A673 (cell line): ENCODE measurements at regions of chr6 and their contacts with region 1.

Region 1: DNA sequence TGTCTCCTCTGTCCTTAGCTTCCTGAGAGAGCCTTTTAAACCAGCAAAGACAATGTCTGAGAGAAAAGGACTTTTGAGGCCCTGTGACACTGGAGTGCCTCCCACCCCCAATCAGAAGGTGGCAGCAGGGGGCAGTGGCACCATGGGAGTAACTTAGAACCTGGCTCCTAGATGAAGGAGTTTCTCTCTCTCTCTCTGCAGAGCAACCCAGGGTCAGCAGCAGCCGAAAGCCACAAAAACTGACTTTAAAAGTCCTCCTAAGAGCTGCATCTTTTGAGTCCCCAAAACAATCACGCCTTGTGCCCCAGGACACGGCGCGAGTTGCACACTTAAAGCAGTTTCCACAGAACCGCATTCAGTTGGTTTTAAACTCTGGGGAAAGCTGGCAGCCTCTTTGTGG is 5.3 kb upstream of the TCP11 start:
- DNase-seq: peak; percentile 57
- H3K4me3 ChIP-seq: no peak overlapping the region
- H3K27ac ChIP-seq: no peak overlapping the region
- H3K4me1 ChIP-seq: peaks cover 5% of the 10 kb centered on the region
- H3K27me3 ChIP-seq: no peaks in the 10 kb centered on the region
- CTCF ChIP-seq: peak; percentile 61

Region 2: GRCh38 chr6:35165630-35166071 is 19.2 kb after region 1 on chr6:
- CTCF ChIA-PET with region 1: no interaction called
- POLR2A ChIA-PET with region 1: no interaction called
- intact Hi-C with region 1: no loop called
- DNase-seq: no peak
- H3K4me3 ChIP-seq: no peak overlapping the region
- H3K27ac ChIP-seq: no peak overlapping the region
- H3K4me1 ChIP-seq: peaks cover 4% of the 10 kb centered on the region
- H3K27me3 ChIP-seq: no peaks in the 10 kb centered on the region
- CTCF ChIP-seq: no peak

Region 3: DNA sequence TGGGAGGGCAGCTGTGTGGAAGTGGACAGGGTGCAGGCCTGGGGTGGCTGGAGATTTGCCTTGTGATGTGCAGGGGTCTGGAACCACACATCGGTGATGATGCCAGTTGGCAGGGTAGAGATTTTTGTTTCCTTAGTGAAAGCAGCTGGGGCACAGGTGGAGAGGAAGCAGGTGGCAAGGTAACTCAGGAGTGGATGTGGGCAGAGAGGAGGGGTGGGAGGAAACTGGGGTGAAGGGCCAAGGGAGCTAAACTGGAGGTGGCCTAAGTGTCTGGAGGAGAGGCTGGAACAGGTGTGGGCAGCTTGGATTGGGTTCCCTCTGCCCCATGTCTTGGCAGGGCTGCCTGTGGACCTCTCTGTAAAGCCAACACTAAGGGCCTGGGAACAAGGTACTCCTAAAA is 62.6 kb after region 1 on chr6:
- CTCF ChIA-PET with region 1: interaction called, 6 read pairs
- POLR2A ChIA-PET with region 1: no interaction called
- intact Hi-C with region 1: loop called (anchors 5 kb)
- DNase-seq: no peak
- H3K4me3 ChIP-seq: no peak overlapping the region
- H3K27ac ChIP-seq: no peak overlapping the region
- H3K4me1 ChIP-seq: no peaks in the 10 kb centered on the region
- H3K27me3 ChIP-seq: peaks cover 34% of the 10 kb centered on the region
- CTCF ChIP-seq: no peak

Region 4: GRCh38 chr6:35240840-35241801 is 94.7 kb after region 1 on chr6:
- CTCF ChIA-PET with region 1: no interaction called
- POLR2A ChIA-PET with region 1: no interaction called
- intact Hi-C with region 1: loop called (anchors 5 kb)
- DNase-seq: peak; percentile 64
- H3K4me3 ChIP-seq: no peak overlapping the region
- H3K27ac ChIP-seq: no peak overlapping the region
- H3K4me1 ChIP-seq: no peaks in the 10 kb centered on the region
- H3K27me3 ChIP-seq: no peaks in the 10 kb centered on the region
- CTCF ChIP-seq: peak; percentile 98